ENCODE measurements at regions of chr10 and their contacts with region 1.

Region 1: GRCh38 chr10:116690356-116691322 is 51.7 kb downstream of the HSPA12A start:
- DNase-seq: no peak
- ATAC-seq: peak; percentile 62
- H3K4me3 ChIP-seq: no peak overlapping the region
- H3K27ac ChIP-seq: peak overlapping the region; percentile 8 to 20
- H3K4me1 ChIP-seq: no peaks in the 10 kb centered on the region
- H3K27me3 ChIP-seq: no peaks in the 10 kb centered on the region

Region 2: DNA sequence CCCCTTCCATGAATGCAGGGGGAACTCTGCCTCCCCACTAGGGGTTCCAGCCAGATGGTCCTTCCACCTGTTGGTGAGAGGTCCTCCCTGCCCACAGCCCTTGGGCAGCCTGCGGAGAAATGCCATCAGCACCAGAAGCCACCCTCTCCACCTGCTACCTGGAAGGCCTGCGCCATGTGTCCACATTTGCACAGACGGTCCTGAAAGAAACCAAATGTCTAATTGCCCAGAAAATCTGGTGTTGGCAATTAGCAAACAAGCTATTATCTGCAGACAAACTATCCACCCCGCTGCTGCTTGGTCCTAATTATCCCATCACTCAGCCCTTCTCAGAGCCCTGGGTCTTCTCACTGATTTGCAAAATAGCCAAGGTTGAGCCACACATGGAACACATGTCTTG is 19.4 kb after region 1 on chr10:
- intact Hi-C with region 1: no loop called
- DNase-seq: no peak
- ATAC-seq: no peak
- H3K4me3 ChIP-seq: no peak overlapping the region
- H3K27ac ChIP-seq: no peak overlapping the region
- H3K4me1 ChIP-seq: peaks cover 0 to 1% of the 10 kb centered on the region in 2 donors
- H3K27me3 ChIP-seq: no peaks in the 10 kb centered on the region

Region 3: DNA sequence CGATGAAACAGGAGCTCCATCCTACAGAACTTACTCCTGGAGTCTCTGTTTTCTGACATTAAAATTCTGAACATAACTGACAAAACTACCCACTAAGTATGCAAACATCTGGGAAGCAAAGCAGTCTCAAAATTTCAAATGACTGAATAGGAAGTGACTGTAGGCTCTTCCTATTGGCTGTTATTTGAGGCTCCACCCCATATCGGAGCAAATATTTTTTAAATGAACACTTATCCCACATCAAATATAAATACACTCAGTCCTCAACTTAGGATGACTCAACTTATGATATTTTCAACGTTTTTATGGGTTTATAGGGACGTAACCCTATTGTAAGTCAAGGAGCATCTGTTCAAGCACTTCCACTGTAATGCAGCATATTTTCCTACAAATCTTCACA is 42.9 kb after region 1 on chr10:
- intact Hi-C with region 1: loop called (anchors 2 to 5 kb)
- DNase-seq: no peak
- ATAC-seq: no peak
- H3K4me3 ChIP-seq: no peak overlapping the region
- H3K27ac ChIP-seq: no peak overlapping the region
- H3K4me1 ChIP-seq: peaks cover 0 to 2% of the 10 kb centered on the region in 2 donors
- H3K27me3 ChIP-seq: no peaks in the 10 kb centered on the region

Region 4: DNA sequence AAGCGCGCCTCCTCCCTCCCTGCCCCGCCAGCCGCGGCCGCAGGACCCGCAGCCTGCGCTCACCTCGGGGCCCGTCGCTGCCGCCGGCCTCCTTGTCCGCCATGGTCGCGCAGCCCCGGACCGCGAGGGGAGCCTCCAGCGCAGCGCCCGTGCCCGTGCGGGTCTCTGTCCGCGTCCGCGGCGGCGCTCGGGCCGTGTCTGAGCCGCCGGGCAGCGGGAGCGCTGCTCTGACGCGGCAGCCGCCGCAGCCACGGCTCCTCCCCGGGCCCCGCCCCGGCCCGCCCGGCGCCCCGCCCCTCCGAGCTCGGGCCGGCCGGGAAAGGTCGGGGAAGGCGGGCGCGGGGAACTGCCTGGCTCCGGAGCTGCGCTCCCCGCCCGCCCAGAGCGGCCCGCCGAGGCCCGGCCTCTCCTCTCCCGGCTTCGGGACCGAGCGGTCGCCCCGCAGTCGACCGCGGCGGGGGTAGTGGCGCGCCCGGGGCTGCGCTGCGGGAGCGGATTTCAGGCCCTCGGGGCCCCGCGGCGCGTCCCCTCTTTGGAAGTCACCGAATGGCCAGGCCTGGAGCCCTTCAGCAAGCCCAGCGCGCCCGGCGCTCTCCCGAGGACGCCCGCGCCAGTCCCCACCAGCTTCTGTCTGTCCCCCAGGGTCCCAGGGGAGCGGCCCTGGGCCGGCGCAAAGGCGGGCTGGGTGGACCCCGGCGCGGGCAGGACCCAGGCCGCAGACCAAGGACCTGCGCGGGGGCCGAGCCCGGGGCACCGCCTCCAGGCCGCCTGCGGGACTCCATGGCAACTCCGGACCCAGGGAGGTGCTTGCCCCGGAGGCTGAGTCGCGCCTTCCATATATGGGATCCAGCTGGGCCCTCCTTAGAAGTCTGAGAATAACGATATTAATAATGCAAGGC is 52.0 kb after region 1 on chr10 and contains the start of gene HSPA12A:
- intact Hi-C with region 1: loop called in 1 of 2 experiments (anchors 5 kb)
- DNase-seq: peak; percentile 91 to 94
- ATAC-seq: peak; percentile 93
- H3K4me3 ChIP-seq: peak within 1 kb of the TSS; percentile 77 to 90
- H3K27ac ChIP-seq: peak within 1 kb of the TSS; percentile 95 to 98
- H3K4me1 ChIP-seq: no peaks in the 10 kb centered on the region
- H3K27me3 ChIP-seq: no peaks in the 10 kb centered on the region
- total RNA-seq, gene HSPA12A: 15.3 to 25.7 TPM

Region 5: DNA sequence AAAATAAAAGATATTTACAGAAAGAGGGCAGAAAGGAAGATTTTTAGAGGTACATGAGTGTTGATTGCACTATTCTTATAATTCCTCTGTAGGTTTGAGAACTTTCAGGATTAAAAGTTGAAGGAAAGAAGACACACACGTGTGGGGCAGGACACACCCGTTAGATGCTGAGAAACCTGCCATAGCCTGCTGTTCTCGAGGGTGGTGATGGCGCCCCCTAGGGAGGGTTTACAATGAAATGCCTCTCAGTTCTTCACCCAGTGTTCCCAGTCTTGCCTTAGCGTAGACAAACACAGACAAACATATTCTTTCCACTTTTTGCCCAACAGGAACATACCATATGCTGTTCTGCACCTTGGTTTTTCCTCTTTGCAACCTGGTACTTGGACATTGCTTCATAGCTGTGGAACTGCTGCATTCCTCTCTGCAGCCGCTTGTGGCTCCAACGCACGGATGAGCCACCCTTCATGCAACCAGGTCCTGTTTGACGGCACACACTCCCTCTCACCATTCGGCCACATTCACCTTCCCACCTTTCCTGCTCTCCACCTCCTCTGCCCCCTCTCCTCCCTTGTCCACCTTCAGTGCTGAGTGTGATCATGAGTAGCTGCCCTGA is 75.0 kb after region 1 on chr10:
- intact Hi-C with region 1: loop called in 1 of 2 experiments (anchors 10 kb)
- DNase-seq: no peak
- ATAC-seq: no peak
- H3K4me3 ChIP-seq: no peak overlapping the region
- H3K27ac ChIP-seq: no peak overlapping the region
- H3K4me1 ChIP-seq: no peaks in the 10 kb centered on the region
- H3K27me3 ChIP-seq: no peaks in the 10 kb centered on the region

Region 6: GRCh38 chr10:117163061-117163953 is 472.7 kb after region 1 on chr10:
- intact Hi-C with region 1: loop called in 1 of 2 experiments (anchors 5 kb)
- DNase-seq: no peak
- ATAC-seq: no peak
- H3K4me3 ChIP-seq: no peak overlapping the region
- H3K27ac ChIP-seq: no peak overlapping the region
- H3K4me1 ChIP-seq: no peaks in the 10 kb centered on the region
- H3K27me3 ChIP-seq: peaks cover 0 to 3% of the 10 kb centered on the region in 2 donors

Region 7: DNA sequence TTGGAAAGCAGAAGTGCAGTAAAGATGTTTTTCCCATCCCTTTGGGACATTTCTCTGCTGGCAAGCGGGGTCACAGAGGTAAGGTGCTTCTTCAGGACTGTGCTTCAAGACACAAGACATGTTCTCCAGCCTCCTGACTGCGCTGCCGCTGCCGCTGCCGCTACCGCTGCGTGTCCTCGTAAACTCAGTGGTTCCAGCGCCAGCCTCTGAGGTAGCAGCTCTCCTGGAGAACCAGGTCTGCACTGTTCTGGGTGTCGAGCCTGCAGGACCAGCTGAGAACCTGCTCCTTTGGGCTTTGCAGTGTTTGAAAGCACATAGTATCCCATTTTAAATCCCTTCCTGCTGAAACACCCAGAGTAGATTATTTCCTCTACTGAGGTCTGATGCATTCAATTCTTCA is 493.7 kb after region 1 on chr10:
- intact Hi-C with region 1: loop called in 1 of 2 experiments (anchors 5 kb)
- DNase-seq: no peak
- ATAC-seq: no peak
- H3K4me3 ChIP-seq: no peak overlapping the region
- H3K27ac ChIP-seq: no peak overlapping the region
- H3K4me1 ChIP-seq: no peaks in the 10 kb centered on the region
- H3K27me3 ChIP-seq: no peaks in the 10 kb centered on the region

Measured in aorta (tissue), 5 donors.